Heart right ventricle (tissue), 16 donors: ENCODE measurements at regions of chr18 and their contacts with region 1.

Region 1: DNA sequence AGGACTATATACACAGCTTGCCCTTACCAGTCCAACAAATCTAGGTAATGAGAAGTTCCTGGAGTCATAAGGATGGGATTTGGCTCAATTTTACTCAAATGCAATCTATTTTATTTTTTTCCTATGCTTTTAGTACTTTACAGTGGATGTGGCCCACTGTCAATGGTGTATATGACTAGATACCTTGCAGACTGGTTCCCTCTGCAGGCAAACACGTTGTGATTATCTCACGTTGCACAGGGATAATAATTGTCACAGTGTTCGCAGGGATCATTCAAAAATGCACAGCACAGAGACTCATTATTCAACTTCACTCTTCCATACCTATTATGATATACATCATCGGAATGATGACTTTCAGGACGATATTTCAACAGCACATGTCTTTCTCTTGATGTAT is 359.7 kb downstream of the MBD2 start:
- DNase-seq: no peak
- ATAC-seq: no peak
- H3K4me3 ChIP-seq: no peak overlapping the region
- H3K27ac ChIP-seq: no peak overlapping the region
- H3K4me1 ChIP-seq: no peaks in the 10 kb centered on the region
- H3K27me3 ChIP-seq: no peaks in the 10 kb centered on the region
- CTCF ChIP-seq: peak in 3 of 9 donors; percentile 9 to 26 (median 25)

Region 2: GRCh38 chr18:53909668-53910067 is 44.9 kb after region 1 on chr18:
- intact Hi-C with region 1: loop called in 1 of 10 experiments (anchors 10 kb)
- DNase-seq: no peak
- ATAC-seq: no peak
- H3K4me3 ChIP-seq: no peak overlapping the region
- H3K27ac ChIP-seq: no peak overlapping the region
- H3K4me1 ChIP-seq: peaks cover 0 to 24% (median 0%) of the 10 kb centered on the region in 9 donors
- H3K27me3 ChIP-seq: no peaks in the 10 kb centered on the region
- CTCF ChIP-seq: peak in 6 of 9 donors; percentile 17 to 54 (median 40)